GM13976 (cell line): ENCODE measurements at regions of chr6 and their contacts with region 1.

Region 1: GRCh38 chr6:106568530-106568929 is 60.8 kb downstream of the RTN4IP1 start:
- DNase-seq: no peak
- CTCF ChIP-seq: no peak

Region 2: GRCh38 chr6:105932440-105932839 is 636.1 kb before region 1 on chr6:
- in situ Hi-C with region 1: no loop called
- DNase-seq: no peak
- CTCF ChIP-seq: no peak

Region 3: DNA sequence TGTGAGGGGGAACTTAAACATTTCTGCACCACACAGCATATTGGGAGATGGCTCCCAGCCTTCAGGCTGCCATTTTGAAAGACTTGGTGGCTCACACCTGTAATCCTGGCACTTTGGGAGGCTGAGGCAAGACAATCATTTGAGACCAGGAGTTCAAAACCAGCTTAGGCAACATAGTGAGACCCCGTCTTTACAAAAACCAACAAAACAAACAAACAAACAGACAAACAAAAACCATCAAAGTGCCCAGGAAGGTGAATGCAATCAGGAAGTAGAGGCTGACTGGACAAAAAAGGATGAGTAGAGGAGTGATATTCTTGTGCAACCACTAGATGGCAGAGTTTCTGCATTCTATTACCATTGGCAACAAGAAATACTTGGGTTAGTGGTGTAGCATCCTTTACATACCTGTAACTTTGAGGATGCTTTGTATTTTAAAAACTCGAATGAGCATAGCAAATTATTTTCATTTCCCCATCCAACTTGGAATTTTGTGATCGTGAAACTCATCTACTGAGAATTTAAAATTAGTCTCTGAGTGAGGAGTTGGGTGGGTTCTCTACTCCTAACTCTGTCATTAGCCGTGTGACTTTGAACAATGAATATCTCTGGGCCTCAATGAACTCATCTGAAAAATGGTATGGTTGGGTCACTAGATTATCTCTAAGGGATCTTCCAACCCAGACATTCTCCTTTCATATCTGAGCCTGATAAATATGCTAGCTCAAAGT is 123.6 kb before region 1 on chr6:
- in situ Hi-C with region 1: loop called (anchors 5 kb)
- DNase-seq: peak; percentile 69
- CTCF ChIP-seq: peak; percentile 48

Region 4: GRCh38 chr6:107523054-107523791 is 954.7 kb after region 1 on chr6:
- in situ Hi-C with region 1: no loop called
- DNase-seq: no peak
- CTCF ChIP-seq: no peak